Sigmoid colon (tissue), 7 donors: ENCODE measurements at regions of chr11 and their contacts with region 1.

Region 1: DNA sequence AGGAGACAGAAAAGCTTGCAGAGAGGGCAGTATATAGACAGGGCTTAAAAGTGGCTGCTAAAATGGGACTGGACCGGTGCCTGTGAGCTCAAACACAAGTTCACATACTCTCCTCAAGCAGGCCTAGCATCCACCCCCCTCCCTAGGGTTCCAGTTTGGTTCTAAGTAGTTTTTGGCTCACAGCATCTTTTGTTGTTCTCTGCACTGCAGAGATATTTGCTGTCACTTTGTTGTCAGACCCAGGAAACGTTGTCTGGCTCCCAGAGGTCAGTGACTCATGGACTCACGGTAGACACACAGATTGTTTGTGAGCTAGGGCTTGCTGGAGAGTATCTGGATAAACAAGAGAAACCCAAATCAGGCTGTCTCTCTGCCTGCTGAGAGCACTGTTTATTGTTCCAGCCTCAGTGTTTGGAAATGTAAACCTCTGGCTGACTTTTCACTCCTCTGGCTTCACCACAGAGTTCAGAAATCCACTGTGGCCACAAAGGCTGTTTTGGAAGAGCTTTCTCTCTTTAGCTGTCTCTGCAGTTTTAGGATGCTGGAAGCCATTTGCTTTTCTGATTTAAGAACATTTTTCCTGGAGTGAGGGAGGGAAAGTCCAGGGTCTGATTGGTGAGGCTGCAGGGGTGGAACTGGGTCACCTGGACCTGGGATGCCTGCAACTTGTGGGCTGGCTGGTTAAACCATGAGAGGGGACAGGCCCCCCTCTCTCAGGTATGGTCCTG is 303.7 kb upstream of the PLET1 start:
- DNase-seq: no peak
- H3K4me3 ChIP-seq: no peak overlapping the region
- H3K27ac ChIP-seq: peak overlapping the region; percentile 57 to 76 (median 72)
- H3K4me1 ChIP-seq: peaks cover 0 to 37% (median 32%) of the 10 kb centered on the region in 4 donors
- H3K27me3 ChIP-seq: no peaks in the 10 kb centered on the region
- CTCF ChIP-seq: no peak
- EP300 ChIP-seq: no peak
- POLR2A ChIP-seq: no peak

Region 2: DNA sequence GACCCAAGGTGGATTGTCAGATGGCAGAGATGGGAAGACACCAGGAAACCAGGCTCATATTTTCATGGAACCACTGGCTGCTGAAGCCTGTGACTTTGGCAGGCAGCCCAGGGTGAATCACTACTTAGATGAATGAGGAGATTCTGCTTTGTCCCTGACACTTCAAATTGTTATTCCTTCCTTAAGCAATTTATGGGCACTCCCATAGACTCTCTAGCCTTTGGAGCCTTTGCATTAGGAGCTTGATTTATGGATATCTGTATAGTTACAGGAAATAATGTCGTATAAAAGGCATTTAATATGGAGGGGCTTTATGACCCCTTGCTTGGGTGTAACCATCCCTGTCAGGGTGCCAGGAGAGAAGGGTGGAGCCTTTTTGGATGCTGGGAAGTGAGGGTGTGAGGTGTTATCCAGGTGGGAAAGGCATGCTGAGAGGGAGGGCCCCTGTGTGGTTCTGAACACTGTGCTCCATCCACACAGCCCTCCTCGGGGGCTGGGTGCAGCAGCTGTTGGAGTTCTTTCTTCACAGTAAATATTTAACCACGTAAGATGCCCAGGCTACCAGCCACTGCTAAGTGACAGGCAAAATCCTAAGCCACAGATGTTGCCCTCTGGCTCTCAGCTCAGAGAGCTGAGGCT is 435.8 kb before region 1 on chr11:
- intact Hi-C with region 1: no loop called
- DNase-seq: peak; percentile 68
- H3K4me3 ChIP-seq: no peak overlapping the region
- H3K27ac ChIP-seq: no peak overlapping the region
- H3K4me1 ChIP-seq: peaks cover 0 to 10% (median 8%) of the 10 kb centered on the region in 4 donors
- H3K27me3 ChIP-seq: no peaks in the 10 kb centered on the region
- CTCF ChIP-seq: no peak
- EP300 ChIP-seq: no peak
- POLR2A ChIP-seq: no peak

Region 3: GRCh38 chr11:112364962-112365481 is 199.4 kb before region 1 on chr11:
- intact Hi-C with region 1: loop called (anchors 10 kb)
- DNase-seq: peak; percentile 85
- H3K4me3 ChIP-seq: no peak overlapping the region
- H3K27ac ChIP-seq: peak overlapping the region; percentile 74 to 86 (median 78)
- H3K4me1 ChIP-seq: peaks cover 3 to 31% (median 29%) of the 10 kb centered on the region in 4 donors
- H3K27me3 ChIP-seq: no peaks in the 10 kb centered on the region
- CTCF ChIP-seq: no peak
- EP300 ChIP-seq: peak in 2 of 4 donors; percentile 64 to 65
- POLR2A ChIP-seq: no peak

Region 4: GRCh38 chr11:112689851-112690250 is 125.5 kb after region 1 on chr11:
- intact Hi-C with region 1: no loop called
- DNase-seq: no peak
- H3K4me3 ChIP-seq: no peak overlapping the region
- H3K27ac ChIP-seq: no peak overlapping the region
- H3K4me1 ChIP-seq: no peaks in the 10 kb centered on the region
- H3K27me3 ChIP-seq: no peaks in the 10 kb centered on the region
- CTCF ChIP-seq: no peak
- EP300 ChIP-seq: no peak
- POLR2A ChIP-seq: no peak

Region 5: DNA sequence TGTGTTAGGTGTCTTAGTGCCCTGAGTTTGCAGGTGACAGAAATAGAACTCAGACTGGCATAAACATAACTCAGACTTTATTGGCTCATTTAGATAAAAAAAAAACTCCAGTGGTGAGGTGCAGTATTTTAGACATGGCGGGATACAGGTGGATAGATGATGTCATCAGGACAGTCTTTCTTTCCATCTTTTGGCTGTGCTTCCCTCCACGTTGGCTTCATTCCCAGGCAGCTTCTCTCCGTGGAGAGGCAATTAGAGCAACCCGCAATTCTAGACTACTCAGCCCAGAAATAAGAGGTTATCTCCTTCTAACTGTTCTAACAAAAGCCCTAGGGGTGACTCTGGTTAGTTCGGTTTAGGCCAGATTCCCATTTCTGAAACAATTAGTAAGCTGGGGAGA is 437.3 kb after region 1 on chr11:
- intact Hi-C with region 1: no loop called
- DNase-seq: no peak
- H3K4me3 ChIP-seq: no peak overlapping the region
- H3K27ac ChIP-seq: no peak overlapping the region
- H3K4me1 ChIP-seq: no peaks in the 10 kb centered on the region
- H3K27me3 ChIP-seq: no peaks in the 10 kb centered on the region
- CTCF ChIP-seq: no peak
- EP300 ChIP-seq: no peak
- POLR2A ChIP-seq: no peak